Endothelial cell of umbilical vein (primary cell): ENCODE measurements at regions of chr19 and their contacts with region 1.

Region 1: DNA sequence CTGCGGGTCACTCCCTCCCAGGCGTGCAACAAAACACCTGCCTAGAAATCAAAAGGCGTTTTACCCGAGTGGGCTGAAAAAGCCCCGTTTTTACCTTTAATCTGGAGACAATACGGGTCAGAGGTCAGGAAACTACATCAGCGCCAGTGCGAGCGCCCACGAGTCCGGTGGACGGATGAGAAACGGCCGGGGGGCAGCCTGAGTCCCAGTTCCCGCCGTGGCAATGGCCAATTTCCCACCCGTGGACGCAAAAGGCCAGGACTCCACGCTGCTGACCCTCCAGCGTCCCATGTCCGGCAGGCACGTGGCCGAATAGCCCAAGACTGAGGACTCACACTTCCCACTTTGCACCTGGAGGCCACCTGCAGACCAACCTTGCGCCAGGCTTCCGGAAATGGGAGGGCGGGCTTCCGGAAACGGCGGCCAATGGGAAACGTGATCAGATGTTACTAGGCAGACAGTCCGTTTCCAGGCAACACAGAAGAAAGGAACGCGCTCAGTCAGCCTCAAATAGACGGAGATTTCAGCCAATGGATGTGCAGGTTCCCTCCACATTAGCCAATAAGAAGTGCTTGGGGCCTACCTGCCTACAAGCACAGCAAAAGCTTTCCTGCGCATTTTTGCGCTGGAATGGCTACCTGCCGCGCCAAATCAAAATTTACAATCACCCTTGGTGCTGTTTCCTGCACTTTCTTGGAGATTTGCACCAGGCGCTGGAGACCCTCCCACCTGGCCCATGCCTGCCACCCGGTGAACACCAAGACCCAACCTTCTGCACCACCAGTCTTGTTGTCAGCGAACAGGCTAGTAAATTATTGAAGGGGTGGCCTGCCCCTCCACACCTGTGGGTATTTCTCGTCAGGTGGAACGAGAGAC is 47.4 kb downstream of the ZFP14 start:
- DNase-seq: peak; percentile 88
- H3K4me3 ChIP-seq: peak overlapping the region; percentile 5 to 52 (median 27)
- H3K27ac ChIP-seq: no peak overlapping the region
- H3K4me1 ChIP-seq: no peaks in the 10 kb centered on the region
- H3K27me3 ChIP-seq: no peaks in the 10 kb centered on the region
- CTCF ChIP-seq: no peak
- POLR2A ChIP-seq: no peak

Region 2: DNA sequence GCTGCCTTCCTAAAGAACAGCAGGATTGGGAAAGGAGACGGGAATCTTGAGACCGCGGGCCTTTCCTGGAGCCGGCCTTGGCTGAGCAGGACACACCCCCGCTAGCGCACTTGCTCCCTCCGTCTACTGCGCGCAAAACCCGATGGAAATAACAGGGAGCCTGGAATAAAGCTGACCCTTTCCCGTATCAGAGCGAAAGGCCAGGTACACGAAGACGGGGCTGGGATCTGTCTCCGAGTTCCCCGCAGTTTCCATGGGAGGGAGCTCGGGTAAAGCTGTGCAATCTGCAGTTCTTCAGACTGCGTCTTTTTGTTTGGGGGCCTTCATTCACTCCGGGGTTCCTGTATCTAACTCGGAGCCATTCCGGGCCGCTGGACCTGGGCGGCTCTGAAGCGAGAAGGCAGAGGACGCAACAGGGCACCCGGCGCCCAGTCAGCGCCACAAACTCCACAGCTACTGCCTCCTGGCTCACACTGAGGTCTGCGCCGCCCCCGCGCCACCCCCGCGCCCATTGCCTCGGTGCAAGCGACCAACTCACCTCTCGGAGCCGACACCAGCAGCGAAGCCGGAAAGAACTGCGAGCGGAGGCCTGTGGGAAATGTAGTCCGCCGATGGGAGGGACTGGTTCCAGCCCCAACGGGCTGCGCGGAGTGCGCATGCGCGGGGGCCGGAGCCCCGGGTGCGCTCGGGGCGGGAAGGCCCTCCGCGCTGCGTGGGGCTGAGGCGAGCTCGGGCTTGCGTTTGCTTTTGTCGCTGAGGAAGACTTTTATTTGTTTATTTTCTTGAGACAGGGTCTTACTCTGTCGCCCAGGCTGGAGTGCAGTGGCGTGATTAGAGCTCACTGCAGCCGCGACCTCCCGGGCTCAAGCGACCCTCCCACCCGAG is 47.3 kb after region 1 on chr19 and contains the start of gene ZFP14:
- CTCF ChIA-PET with region 1: no interaction called
- POLR2A ChIA-PET with region 1: no interaction called
- dilution Hi-C with region 1: no loop called
- intact Hi-C with region 1: loop called (anchors 1 kb)
- DNase-seq: peak; percentile 94
- H3K4me3 ChIP-seq: peak within 1 kb of the TSS; percentile 62 to 87 (median 78)
- H3K27ac ChIP-seq: no peak within 1 kb of the TSS
- H3K4me1 ChIP-seq: peaks cover 7% of the 10 kb centered on the region
- H3K27me3 ChIP-seq: no peaks in the 10 kb centered on the region
- CTCF ChIP-seq: peak in 1 of 2 donors; percentile 20
- POLR2A ChIP-seq: peak; percentile 58
- total RNA-seq, gene ZFP14: 2.6 and 3.1 TPM in 2 replicates